ENCODE measurements at regions of chr14 and their contacts with region 1.

Region 1: GRCh38 chr14:29007990-29008389 is 241.4 kb downstream of the FOXG1 start:
- DNase-seq: no peak
- H3K4me3 ChIP-seq: no peak overlapping the region
- H3K27ac ChIP-seq: no peak overlapping the region
- H3K4me1 ChIP-seq: no peaks in the 10 kb centered on the region
- H3K27me3 ChIP-seq: no peaks in the 10 kb centered on the region
- CTCF ChIP-seq: no peak

Region 2: DNA sequence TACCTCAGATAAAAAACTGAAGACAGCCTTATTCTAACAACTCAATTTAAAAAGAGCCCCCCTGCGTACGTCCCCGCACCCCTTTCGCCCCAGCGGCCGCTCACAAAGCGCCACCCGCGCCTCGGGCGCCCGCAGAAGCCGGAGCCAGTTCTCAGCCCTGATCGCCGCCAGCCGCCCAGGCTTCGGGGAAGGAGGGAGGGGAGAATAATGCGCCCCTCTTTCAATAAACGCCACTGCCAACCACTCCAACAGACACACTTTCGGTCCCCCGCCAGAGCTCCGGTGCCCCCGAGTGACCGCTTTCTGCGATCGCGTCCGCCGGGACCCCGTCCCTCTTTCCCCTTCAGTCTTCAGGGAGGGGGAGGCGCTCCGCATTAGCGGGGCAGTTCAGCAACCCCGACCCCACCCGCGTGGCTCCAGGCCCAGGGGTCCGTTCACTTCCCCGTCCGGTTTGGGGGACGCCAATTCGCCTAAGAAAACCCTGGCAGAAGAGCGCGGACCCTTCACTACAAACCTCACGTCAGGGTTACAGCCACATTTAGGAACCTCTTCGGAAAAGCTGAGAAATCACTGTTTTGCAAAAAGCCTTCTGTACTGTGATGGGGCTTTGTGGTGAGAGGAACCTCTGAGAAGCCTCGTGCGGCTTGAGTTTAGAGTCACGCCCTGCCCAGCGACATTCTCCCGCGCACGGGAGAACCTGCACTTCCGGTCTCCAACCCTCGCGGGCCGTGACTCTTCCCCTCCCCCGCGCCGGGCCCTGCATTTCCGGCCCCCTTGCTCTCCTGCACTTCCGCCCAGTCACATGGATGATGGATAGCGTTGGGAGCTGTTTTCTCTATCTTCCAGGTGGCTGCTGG is 222.7 kb before region 1 on chr14:
- CTCF ChIA-PET with region 1: no interaction called
- POLR2A ChIA-PET with region 1: no interaction called
- intact Hi-C with region 1: no loop called
- DNase-seq: peak; percentile 35
- H3K4me3 ChIP-seq: peak overlapping the region; percentile 23
- H3K27ac ChIP-seq: no peak overlapping the region
- H3K4me1 ChIP-seq: peaks cover 8% of the 10 kb centered on the region
- H3K27me3 ChIP-seq: peaks cover 75% of the 10 kb centered on the region
- CTCF ChIP-seq: no peak

Region 3: DNA sequence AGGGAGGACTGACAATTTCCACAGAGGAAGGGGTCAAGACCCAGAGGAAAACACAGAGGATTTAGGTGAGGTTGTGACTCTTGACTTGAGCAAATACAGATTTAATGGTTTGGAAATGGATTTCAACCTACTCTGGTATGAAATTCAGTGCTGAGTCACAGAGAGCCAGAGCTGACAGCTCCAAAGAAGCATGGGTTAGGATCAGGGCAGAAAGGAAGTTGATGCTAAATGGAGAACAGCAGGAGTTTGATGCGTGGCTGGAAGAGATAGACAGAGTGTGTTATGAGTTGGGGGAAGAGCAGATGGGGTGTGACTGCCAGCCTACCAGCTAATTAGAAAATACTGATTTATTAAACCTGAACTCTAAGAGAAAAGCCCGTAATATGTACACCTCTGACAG is 31.2 kb after region 1 on chr14:
- CTCF ChIA-PET with region 1: no interaction called
- POLR2A ChIA-PET with region 1: interaction called, 13 read pairs
- intact Hi-C with region 1: no loop called
- DNase-seq: peak; percentile 19
- H3K4me3 ChIP-seq: no peak overlapping the region
- H3K27ac ChIP-seq: no peak overlapping the region
- H3K4me1 ChIP-seq: no peaks in the 10 kb centered on the region
- H3K27me3 ChIP-seq: no peaks in the 10 kb centered on the region
- CTCF ChIP-seq: no peak

Region 4: DNA sequence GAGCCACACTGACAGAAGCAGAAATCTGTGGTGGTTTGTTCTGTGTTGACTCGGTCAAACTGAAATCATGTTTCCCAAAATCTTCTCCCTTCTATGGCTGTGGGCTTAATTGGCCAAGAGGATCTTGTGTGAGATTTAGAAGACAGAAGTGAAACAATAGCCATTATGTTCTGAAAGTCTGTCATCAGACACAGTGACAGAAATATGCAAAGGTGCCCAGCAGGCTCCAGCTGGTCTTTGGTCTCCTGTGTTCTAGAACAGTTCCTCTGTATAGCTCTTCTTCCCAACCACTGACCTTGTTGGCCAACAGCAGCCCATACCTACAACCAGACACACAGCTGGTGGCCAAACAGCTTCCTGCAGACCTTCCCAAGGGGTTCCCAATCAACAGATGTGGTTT is 1841.4 kb after region 1 on chr14:
- CTCF ChIA-PET with region 1: no interaction called
- POLR2A ChIA-PET with region 1: no interaction called
- intact Hi-C with region 1: no loop called
- DNase-seq: no peak
- H3K4me3 ChIP-seq: no peak overlapping the region
- H3K27ac ChIP-seq: no peak overlapping the region
- H3K4me1 ChIP-seq: no peaks in the 10 kb centered on the region
- H3K27me3 ChIP-seq: no peaks in the 10 kb centered on the region
- CTCF ChIP-seq: no peak

Measured in A673 (cell line).